CD8-positive, alpha-beta T cell (primary cell): ENCODE measurements at regions of chr1 and their contacts with region 1.

Region 1: GRCh38 chr1:39720094-39720999 is 18.3 kb upstream of the PPIE start:
- DNase-seq: peak in 3 of 9 experiments; percentile 12 to 80 (median 72)
- ATAC-seq: peak; percentile 85
- H3K4me3 ChIP-seq: no peak overlapping the region
- H3K4me3 Mint-ChIP-seq: no peak overlapping the region
- H3K27ac ChIP-seq: no peak overlapping the region
- H3K27ac Mint-ChIP-seq: no peak overlapping the region
- H3K4me1 ChIP-seq: no peaks in the 10 kb centered on the region
- H3K4me1 Mint-ChIP-seq: no peaks in the 10 kb centered on the region
- H3K27me3 ChIP-seq: no peaks in the 10 kb centered on the region
- H3K27me3 Mint-ChIP-seq: peaks cover 38% of the 10 kb centered on the region
- CTCF ChIP-seq: peak; percentile 91

Region 2: DNA sequence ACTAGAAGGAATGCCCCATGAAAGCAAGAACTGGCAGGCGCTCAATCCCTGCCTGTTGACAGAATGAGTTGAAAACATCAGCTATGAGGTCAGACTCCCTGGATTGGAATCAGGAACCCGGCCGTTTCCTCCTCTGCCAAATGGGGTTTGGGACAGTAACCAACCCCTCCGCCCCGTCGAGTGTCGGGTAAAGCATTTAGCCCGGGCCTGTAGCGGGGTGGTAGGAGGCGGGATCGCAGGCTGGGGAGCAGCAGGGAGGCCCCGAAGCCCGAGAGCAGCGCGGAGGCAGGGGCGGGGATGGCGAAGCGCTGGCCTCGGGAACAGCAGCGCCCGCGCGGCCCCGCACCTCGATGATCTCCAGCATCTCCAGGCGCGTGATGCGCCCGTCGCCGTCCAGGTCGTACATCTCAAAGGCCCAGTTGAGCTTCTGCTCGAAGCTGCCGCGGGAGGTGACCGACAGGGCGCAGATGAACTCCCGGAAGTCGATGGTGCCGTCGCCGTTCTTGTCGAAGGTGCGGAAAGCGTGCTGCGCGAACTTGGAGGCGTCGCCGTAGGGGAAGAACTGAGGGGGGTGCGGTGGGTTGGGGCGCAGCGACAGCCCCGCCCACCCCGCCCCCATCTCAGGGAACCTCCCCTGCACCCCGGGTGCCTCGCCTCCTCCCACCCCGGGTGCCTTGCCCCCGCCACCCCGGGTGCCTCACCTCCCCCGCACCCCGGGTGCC is 36.6 kb before region 1 on chr1:
- CTCF ChIA-PET with region 1: interaction called, 12 read pairs
- POLR2A ChIA-PET with region 1: no interaction called
- intact Hi-C with region 1: no loop called
- DNase-seq: peak; percentile 22 to 77 (median 56)
- ATAC-seq: peak; percentile 80
- H3K4me3 ChIP-seq: peak overlapping the region; percentile 4 to 29
- H3K4me3 Mint-ChIP-seq: peak overlapping the region; percentile 60
- H3K27ac ChIP-seq: no peak overlapping the region
- H3K27ac Mint-ChIP-seq: peak overlapping the region; percentile 61
- H3K4me1 ChIP-seq: peaks cover 28% of the 10 kb centered on the region
- H3K4me1 Mint-ChIP-seq: peaks cover 34% of the 10 kb centered on the region
- H3K27me3 ChIP-seq: peaks cover 0 to 6% of the 10 kb centered on the region in 2 experiments
- H3K27me3 Mint-ChIP-seq: peaks cover 24% of the 10 kb centered on the region
- CTCF ChIP-seq: no peak

Region 3: GRCh38 chr1:39799770-39800470 is 79.6 kb after region 1 on chr1:
- CTCF ChIA-PET with region 1: no interaction called
- POLR2A ChIA-PET with region 1: no interaction called
- intact Hi-C with region 1: loop called in 1 of 2 experiments (anchors 2 kb)
- DNase-seq: peak; percentile 24 to 82 (median 68)
- ATAC-seq: peak; percentile 67
- H3K4me3 ChIP-seq: peak overlapping the region; percentile 14 to 38
- H3K4me3 Mint-ChIP-seq: peak overlapping the region; percentile 67
- H3K27ac ChIP-seq: peak overlapping the region; percentile 41 to 78
- H3K27ac Mint-ChIP-seq: peak overlapping the region; percentile 70
- H3K4me1 ChIP-seq: peaks cover 5% of the 10 kb centered on the region
- H3K4me1 Mint-ChIP-seq: peaks cover 8% of the 10 kb centered on the region
- H3K27me3 ChIP-seq: no peaks in the 10 kb centered on the region
- H3K27me3 Mint-ChIP-seq: no peaks in the 10 kb centered on the region
- CTCF ChIP-seq: peak; percentile 76